ENCODE measurements at regions of chr15 and their contacts with region 1.

Region 1: DNA sequence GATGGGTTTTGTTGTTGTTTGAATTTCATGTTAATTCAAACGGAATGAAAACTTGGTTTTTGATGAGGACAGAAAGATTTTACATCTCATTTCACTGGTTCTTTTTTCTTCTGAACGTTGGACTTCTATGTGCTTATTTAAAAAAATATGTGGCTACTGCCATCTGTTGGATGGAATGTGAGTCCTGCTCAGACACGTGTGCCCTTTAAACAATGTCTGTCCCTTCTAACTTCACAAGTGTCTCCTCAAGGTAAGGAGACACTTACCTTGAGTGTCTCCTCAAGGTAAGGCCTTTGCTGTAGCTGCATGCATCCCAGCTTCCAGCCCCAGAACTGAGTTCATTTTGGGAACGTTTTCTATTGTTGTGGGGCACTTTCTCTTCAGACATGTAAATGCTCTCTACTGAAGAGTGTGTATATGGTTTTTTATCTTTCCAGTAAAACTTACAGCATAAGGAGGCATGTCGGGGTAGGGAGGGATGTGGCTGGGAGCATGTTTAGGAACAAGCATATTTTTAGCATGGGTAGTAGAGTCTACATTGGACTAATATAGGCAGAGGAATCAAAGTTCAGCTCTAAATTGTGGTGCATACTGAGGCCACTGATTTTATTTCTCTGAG is 63.1 kb upstream of the UBE3A start:
- DNase-seq: no peak
- ATAC-seq: peak in 2 of 4 donors; percentile 63 to 67
- H3K4me3 ChIP-seq: no peak overlapping the region
- H3K27ac ChIP-seq: no peak overlapping the region
- H3K4me1 ChIP-seq: no peaks in the 10 kb centered on the region
- H3K27me3 ChIP-seq: no peaks in the 10 kb centered on the region
- CTCF ChIP-seq: peak; percentile 61

Region 2: GRCh38 chr15:25136119-25136518 is 365.8 kb before region 1 on chr15:
- intact Hi-C with region 1: loop called (anchors 5 to 10 kb)
- DNase-seq: no peak
- ATAC-seq: peak; percentile 55 to 88 (median 82)
- H3K4me3 ChIP-seq: no peak overlapping the region
- H3K27ac ChIP-seq: no peak overlapping the region
- H3K4me1 ChIP-seq: no peaks in the 10 kb centered on the region
- H3K27me3 ChIP-seq: no peaks in the 10 kb centered on the region
- CTCF ChIP-seq: peak; percentile 33

Measured in psoas muscle (tissue), 8 donors.